ENCODE measurements at regions of chr1 and their contacts with region 1.

Region 1: GRCh38 chr1:170664828-170665612 is 1.1 kb downstream of the PRRX1 start:
- DNase-seq: peak; percentile 78
- ATAC-seq: peak; percentile 67

Region 2: GRCh38 chr1:170074250-170075157 is 590.5 kb before region 1 on chr1 and contains the start of gene KIFAP3:
- intact Hi-C with region 1: loop called (anchors 5 kb)
- DNase-seq: peak; percentile 99
- ATAC-seq: peak; percentile 100
- total RNA-seq, gene KIFAP3: 31.0 TPM

Region 3: GRCh38 chr1:170410401-170411166 is 254.4 kb before region 1 on chr1:
- intact Hi-C with region 1: loop called (anchors 10 kb)
- DNase-seq: no peak
- ATAC-seq: peak; percentile 84

Region 4: GRCh38 chr1:170436928-170437327 is 228.1 kb before region 1 on chr1:
- intact Hi-C with region 1: no loop called
- DNase-seq: no peak
- ATAC-seq: no peak

Region 5: DNA sequence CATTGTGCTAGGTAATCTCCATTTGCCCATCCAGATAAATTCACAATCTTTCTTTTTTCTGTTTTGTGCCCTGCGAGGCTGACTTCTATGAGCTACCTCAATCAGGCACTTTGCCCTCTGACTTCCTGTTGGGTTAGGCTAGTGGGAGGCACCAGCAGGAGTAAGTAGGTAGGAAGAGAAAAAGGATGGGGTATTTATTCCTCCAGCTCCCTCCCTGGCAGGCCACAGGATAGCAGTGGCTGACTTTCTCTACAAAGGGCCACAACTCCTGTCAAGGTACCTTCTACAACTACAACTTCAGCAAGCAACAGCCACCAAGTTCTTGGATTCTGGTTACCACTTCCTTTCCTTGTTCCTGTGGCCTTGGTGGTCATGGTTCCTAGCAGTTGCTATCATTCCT is 151.9 kb before region 1 on chr1:
- intact Hi-C with region 1: no loop called
- DNase-seq: no peak
- ATAC-seq: no peak

Region 6: DNA sequence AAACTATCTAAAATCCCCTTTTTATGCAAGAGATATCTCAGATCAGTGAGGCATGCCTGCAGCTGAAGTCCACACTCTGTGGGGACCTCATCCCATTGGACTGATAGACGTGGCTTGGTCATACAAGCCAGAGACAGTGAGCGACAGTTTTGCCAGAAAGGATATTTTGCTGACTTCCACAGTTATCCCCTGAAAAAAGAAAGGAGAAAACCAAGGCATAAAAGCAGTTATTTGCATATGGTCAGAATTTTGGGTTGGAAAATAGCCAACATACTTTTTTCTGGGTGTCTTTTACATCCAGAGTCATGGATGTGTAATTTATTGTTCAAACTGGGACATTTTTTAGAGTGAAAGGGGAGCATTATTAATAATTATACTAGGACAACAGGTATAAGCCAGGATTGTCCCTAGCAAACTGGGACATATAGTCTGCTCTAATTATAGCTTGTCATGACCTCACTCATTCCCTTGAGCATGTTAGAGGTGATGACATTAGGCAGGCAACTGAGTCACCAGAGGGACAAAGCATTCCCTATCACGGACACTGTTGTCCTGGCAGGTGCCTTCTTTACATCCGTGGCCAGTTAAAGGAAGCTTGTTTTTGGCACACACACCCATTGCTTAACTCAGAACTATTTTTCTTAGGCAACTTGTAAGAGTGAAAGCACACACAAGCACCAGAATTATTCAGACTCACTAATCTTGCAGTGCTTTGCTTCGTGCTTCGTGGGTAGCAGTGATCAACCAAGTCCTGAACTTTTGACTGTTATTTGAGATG is 64.4 kb after region 1 on chr1:
- intact Hi-C with region 1: loop called (anchors 5 kb)
- DNase-seq: no peak
- ATAC-seq: peak; percentile 87

Region 7: DNA sequence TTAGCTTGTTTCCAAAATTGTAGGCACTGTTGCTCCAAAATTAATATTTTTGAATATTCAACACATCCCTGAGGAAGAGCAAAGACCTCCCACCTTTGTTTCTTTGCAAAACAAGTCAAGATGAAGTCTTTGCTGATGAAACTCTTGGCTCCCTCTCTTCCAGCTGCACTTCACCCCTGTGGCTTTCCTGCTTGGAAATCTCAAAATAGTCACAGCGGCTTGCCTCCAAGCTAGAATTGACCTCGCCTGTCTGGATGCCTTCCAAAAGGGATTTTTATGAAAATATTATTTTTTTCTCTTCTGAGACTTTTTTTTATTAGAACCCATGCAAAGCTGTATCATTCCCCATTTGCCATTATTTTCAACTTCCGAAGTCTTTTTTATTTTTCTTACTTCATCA is 199.2 kb after region 1 on chr1:
- intact Hi-C with region 1: no loop called
- DNase-seq: no peak
- ATAC-seq: peak; percentile 88

Region 8: GRCh38 chr1:170881268-170882265 is 216.5 kb after region 1 on chr1:
- intact Hi-C with region 1: loop called (anchors 5 kb)
- DNase-seq: no peak
- ATAC-seq: peak; percentile 65